Heart right ventricle (tissue), 16 donors: ENCODE measurements at regions of chr9 and their contacts with region 1.

Region 1: GRCh38 chr9:121498150-121498486 is 1.5 kb downstream of the GGTA1 start:
- DNase-seq: peak in 1 of 2 donors; percentile 78
- ATAC-seq: peak; percentile 23 to 75 (median 64)
- H3K4me3 ChIP-seq: peak overlapping the region in 9 of 10 donors; percentile 51 to 82 (median 70)
- H3K27ac ChIP-seq: peak overlapping the region in 8 of 10 donors; percentile 86 to 95 (median 94)
- H3K4me1 ChIP-seq: peaks cover 5 to 67% (median 28%) of the 10 kb centered on the region in 9 donors
- H3K27me3 ChIP-seq: peaks cover 0 to 6% (median 0%) of the 10 kb centered on the region in 7 donors
- CTCF ChIP-seq: peak; percentile 36 to 82 (median 73)

Region 2: GRCh38 chr9:121439711-121440664 is 58.1 kb before region 1 on chr9:
- intact Hi-C with region 1: no loop called
- DNase-seq: no peak
- ATAC-seq: peak; percentile 51 to 85 (median 82)
- H3K4me3 ChIP-seq: no peak overlapping the region
- H3K27ac ChIP-seq: no peak overlapping the region
- H3K4me1 ChIP-seq: peaks cover 0 to 22% (median 8%) of the 10 kb centered on the region in 9 donors
- H3K27me3 ChIP-seq: no peaks in the 10 kb centered on the region
- CTCF ChIP-seq: peak in 8 of 9 donors; percentile 7 to 64 (median 38)

Region 3: DNA sequence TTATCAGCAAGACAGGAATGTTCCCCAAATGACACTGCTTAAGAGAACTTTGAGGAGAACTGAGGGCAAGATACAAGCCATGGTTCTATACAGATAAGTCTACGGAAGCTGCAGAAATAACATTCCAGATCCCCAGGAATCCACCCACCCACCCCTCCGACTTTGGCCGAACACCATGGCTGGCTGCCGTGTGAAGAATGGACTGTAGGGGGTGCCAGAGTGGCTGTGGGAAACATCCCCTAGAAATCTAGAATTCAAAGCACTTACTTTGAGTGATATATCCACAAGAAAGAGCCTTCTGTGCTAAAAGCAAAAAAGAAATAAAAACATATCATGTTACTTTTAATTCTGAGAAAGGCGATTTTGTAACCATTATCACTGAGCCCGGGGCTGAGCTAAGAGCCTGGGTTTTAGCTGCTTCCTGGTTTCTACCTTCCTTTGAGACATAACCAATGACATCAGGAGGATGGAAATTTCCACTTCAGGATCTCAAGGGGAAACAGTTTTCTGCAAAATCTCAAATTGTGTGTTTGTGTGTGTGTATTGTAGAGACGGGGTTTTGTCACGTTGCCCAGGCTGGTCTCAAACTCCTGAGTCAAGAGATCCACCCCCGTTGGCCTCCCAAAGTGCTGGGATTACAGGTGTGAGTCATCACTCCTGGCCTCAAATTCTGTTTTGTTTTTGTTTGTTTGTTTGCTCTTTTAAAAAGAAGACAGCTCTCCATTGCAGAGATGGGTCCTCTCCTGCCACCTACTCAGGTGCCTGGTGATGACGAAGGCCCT is 34.9 kb before region 1 on chr9:
- intact Hi-C with region 1: loop called in 8 of 10 experiments (anchors 1 to 5 kb)
- DNase-seq: peak; percentile 72 to 73
- ATAC-seq: peak in 7 of 8 donors; percentile 54 to 85 (median 72)
- H3K4me3 ChIP-seq: no peak overlapping the region
- H3K27ac ChIP-seq: peak overlapping the region in 1 of 10 donors; percentile 41
- H3K4me1 ChIP-seq: peaks cover 0 to 31% (median 10%) of the 10 kb centered on the region in 9 donors
- H3K27me3 ChIP-seq: no peaks in the 10 kb centered on the region
- CTCF ChIP-seq: peak; percentile 74 to 89 (median 83)